B cell (primary cell): ENCODE measurements at regions of chr3 and their contacts with region 1.

Region 1: DNA sequence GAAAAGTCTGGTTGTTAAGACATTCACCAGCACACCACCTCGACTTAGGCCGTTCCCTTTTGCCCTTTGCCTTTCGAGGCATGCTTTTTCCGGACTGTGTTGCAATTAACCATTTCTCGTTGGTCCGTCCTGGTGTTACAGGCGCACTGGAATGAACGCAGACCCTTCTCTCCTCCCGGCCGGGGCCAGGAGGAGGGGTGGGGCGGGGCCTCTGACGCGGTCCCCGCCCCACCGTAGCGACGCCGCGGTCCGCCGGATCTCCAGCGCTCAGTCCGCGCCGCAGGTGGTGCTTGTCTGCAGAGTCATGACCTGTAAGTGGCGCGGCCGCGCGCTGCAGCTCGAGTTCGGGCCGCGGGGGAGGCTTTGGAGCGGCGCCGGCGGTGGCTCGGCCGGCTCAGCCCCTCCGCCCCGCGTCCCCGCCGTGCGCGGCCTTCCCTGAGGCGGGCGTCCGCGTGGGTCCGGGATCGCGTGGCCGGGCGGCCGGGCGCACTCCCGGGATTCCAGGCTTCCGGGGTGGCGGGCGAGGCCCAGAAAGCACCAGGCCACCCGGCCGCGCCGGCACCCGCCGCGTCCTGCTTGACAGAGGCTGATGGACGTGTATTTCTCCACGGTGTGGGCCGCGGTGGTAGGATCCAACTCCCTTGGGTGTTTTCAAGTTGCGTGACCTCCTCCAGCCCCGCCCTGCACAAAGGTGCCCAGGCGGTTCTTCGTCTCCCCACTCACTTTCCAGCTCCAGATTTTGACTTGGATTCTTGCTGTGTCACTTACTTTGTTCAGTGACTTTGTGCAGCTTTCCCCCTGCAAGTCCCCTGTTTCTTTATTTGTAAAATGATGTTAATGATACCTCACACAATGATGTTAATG is at the start of gene NIT2:
- DNase-seq: peak; percentile 88
- ATAC-seq: peak; percentile 98
- H3K4me3 ChIP-seq: peak within 1 kb of the TSS; percentile 54 to 82 (median 72)
- H3K4me3 Mint-ChIP-seq: peak within 1 kb of the TSS; percentile 96
- H3K27ac ChIP-seq: peak within 1 kb of the TSS; percentile 54 to 79
- H3K27ac Mint-ChIP-seq: peak within 1 kb of the TSS; percentile 91
- H3K4me1 ChIP-seq: peaks cover 5 to 16% of the 10 kb centered on the region in 2 donors
- H3K4me1 Mint-ChIP-seq: peaks cover 23% of the 10 kb centered on the region
- H3K27me3 ChIP-seq: no peaks in the 10 kb centered on the region
- H3K27me3 Mint-ChIP-seq: no peaks in the 10 kb centered on the region
- CTCF ChIP-seq: no peak
- total RNA-seq, gene NIT2: 34.4 and 36.5 TPM in 2 replicates

Region 2: DNA sequence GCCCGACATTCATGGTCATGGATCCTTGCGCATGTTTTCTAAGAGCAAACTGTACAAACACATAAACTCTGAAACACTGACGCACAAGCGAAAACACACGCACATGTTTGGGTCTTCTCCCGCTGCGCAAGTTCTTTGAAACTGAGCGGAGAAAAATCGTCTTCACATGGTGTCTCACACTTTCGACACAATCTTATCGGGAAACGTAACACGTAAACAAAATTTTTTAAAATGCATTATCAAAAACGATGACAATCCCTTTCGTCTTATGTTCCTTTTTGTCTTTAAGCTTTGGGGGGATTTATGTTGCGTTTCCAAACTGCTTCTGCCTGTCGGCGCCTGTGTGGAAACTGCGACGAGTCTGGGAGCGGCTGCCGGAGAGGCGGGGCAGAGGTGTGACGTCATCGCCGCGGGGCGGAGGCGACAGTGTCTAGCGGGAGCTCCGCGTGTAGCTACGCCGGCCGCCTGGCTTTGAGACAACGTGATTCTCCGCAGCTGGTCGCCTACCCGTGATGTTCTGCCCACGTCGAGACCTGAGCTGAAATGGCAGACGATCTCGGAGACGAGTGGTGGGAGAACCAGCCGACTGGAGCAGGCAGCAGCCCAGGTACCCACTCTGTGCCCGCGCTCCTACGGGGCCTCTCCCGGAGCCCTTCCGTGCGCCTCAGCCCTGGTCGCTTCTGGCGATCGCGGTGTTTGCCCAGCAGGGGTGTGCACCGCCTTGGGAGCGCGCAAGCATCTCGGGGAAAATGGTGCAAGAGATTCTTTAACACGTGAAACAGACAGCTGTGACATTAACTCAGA is 517.1 kb before region 1 on chr3 and contains the start of gene CMSS1:
- CTCF ChIA-PET with region 1: interaction called, 5 read pairs
- POLR2A ChIA-PET with region 1: no interaction called
- intact Hi-C with region 1: loop called (anchors 1 kb)
- DNase-seq: peak; percentile 98
- ATAC-seq: peak; percentile 91
- H3K4me3 ChIP-seq: peak within 1 kb of the TSS; percentile 71 to 99 (median 89)
- H3K4me3 Mint-ChIP-seq: peak within 1 kb of the TSS; percentile 99
- H3K27ac ChIP-seq: peak within 1 kb of the TSS; percentile 85 to 91
- H3K27ac Mint-ChIP-seq: peak within 1 kb of the TSS; percentile 100
- H3K4me1 ChIP-seq: peaks cover 16 to 17% of the 10 kb centered on the region in 2 donors
- H3K4me1 Mint-ChIP-seq: peaks cover 39% of the 10 kb centered on the region
- H3K27me3 ChIP-seq: no peaks in the 10 kb centered on the region
- H3K27me3 Mint-ChIP-seq: no peaks in the 10 kb centered on the region
- CTCF ChIP-seq: no peak
- total RNA-seq, gene CMSS1: 22.0 and 22.8 TPM in 2 replicates

Region 3: DNA sequence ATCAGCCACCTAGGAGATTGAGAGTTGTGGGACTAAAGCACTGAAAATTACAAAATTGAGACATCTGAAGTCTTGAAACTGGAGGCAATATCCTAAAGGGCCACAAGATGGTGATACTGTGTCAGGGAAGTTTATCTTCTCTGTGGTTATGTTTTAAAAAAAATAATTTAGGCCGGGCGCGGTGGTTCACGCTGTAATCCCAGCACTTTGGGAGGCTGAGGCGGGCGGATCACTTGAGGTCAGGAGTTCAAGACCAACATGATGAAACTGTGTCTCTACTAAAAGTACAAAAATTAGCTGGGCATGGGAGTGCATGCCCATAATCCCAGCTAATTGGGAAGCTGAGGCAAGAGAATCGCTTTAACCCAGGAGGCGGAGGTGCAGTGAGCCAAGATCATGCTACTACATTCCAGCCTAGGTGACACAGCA is 18.1 kb before region 1 on chr3:
- CTCF ChIA-PET with region 1: interaction called, 6 read pairs
- POLR2A ChIA-PET with region 1: no interaction called
- intact Hi-C with region 1: loop called (anchors 2 kb)
- DNase-seq: peak; percentile 62
- ATAC-seq: peak; percentile 60
- H3K4me3 ChIP-seq: no peak overlapping the region
- H3K4me3 Mint-ChIP-seq: no peak overlapping the region
- H3K27ac ChIP-seq: no peak overlapping the region
- H3K27ac Mint-ChIP-seq: no peak overlapping the region
- H3K4me1 ChIP-seq: peaks cover 0 to 5% of the 10 kb centered on the region in 2 donors
- H3K4me1 Mint-ChIP-seq: no peaks in the 10 kb centered on the region
- H3K27me3 ChIP-seq: no peaks in the 10 kb centered on the region
- H3K27me3 Mint-ChIP-seq: no peaks in the 10 kb centered on the region
- CTCF ChIP-seq: peak; percentile 75

Region 4: DNA sequence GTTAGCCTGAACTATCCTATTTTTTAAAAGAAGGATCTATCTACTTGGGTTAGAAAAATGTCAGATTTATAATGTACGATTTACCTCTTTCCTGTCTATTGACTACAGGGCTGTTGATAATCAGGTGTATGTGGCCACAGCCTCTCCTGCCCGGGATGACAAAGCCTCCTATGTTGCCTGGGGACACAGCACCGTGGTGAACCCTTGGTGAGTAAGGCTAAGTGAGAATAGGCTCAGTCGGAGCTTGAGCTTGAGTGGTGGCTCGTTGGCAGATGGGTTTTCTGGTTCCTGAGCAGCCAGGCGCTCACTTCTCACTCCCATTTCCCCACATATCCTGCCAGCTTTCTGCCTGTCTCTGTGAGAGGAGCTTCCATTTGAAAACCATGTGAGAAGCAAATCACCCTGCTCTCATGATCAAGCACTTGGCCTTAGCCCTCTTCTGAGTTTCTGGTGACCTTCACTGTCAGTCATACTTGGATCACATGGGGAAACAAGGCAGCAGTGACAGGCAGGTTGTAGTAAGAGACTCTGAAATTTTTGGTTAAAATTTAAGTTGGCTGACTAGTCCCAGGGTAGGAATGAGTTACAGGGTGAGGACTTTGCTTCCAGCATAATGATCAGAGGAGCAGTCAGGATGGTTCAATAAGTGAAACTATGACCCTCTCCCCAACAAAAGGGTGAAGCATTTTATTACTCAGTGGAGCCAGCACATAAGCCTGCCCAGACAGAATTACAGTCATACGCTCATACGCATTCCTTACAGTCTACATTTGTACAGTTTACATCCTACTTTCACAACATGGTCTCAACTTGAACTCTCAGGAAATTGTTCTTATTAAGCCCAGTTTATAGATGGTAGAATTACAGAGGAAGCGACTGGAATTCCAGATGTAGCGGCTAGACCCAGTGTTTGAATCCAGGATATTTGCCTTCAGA is 17.8 kb after region 1 on chr3:
- CTCF ChIA-PET with region 1: no interaction called
- POLR2A ChIA-PET with region 1: no interaction called
- intact Hi-C with region 1: no loop called
- DNase-seq: no peak
- ATAC-seq: no peak
- H3K4me3 ChIP-seq: no peak overlapping the region
- H3K4me3 Mint-ChIP-seq: no peak overlapping the region
- H3K27ac ChIP-seq: no peak overlapping the region
- H3K27ac Mint-ChIP-seq: no peak overlapping the region
- H3K4me1 ChIP-seq: no peaks in the 10 kb centered on the region
- H3K4me1 Mint-ChIP-seq: no peaks in the 10 kb centered on the region
- H3K27me3 ChIP-seq: no peaks in the 10 kb centered on the region
- H3K27me3 Mint-ChIP-seq: no peaks in the 10 kb centered on the region
- CTCF ChIP-seq: no peak

Region 5: DNA sequence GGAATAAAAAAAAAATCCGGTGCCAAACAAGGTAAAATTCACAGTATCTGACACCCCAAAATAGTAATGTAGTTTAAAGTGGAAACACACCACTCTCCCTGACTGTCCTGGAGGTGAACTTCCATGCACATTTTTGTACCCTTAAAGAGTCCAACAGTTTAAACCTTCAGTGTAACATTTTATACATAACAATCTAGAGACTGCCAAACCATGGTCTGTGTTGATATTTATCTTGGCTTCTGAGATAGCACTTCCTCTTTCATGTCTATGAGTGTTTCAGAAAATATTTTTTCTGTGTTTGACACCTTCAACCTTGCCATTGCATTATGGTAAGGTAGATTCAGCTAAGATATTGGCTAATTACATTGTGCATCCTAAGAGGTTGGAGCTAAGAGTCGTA is 171.6 kb after region 1 on chr3:
- CTCF ChIA-PET with region 1: no interaction called
- POLR2A ChIA-PET with region 1: no interaction called
- intact Hi-C with region 1: no loop called
- DNase-seq: no peak
- ATAC-seq: no peak
- H3K4me3 ChIP-seq: no peak overlapping the region
- H3K4me3 Mint-ChIP-seq: no peak overlapping the region
- H3K27ac ChIP-seq: no peak overlapping the region
- H3K27ac Mint-ChIP-seq: no peak overlapping the region
- H3K4me1 ChIP-seq: no peaks in the 10 kb centered on the region
- H3K4me1 Mint-ChIP-seq: no peaks in the 10 kb centered on the region
- H3K27me3 ChIP-seq: peaks cover 0 to 9% (median 0%) of the 10 kb centered on the region in 4 experiments
- H3K27me3 Mint-ChIP-seq: peaks cover 47% of the 10 kb centered on the region
- CTCF ChIP-seq: no peak